CD8-positive, alpha-beta T cell (primary cell): ENCODE measurements at regions of chr6 and their contacts with region 1.

Region 1: GRCh38 chr6:89145787-89146646 is at the start of gene PM20D2:
- DNase-seq: peak; percentile 35 to 80 (median 64)
- ATAC-seq: peak; percentile 77
- H3K4me3 ChIP-seq: peak within 1 kb of the TSS; percentile 66 to 87
- H3K4me3 Mint-ChIP-seq: peak within 1 kb of the TSS; percentile 96
- H3K27ac ChIP-seq: peak within 1 kb of the TSS; percentile 73 to 85
- H3K27ac Mint-ChIP-seq: peak within 1 kb of the TSS; percentile 97
- H3K4me1 ChIP-seq: peaks cover 19% of the 10 kb centered on the region
- H3K4me1 Mint-ChIP-seq: peaks cover 34% of the 10 kb centered on the region
- H3K27me3 ChIP-seq: no peaks in the 10 kb centered on the region
- H3K27me3 Mint-ChIP-seq: no peaks in the 10 kb centered on the region
- CTCF ChIP-seq: no peak
- total RNA-seq, gene PM20D2: 5.5 to 6.2 TPM

Region 2: DNA sequence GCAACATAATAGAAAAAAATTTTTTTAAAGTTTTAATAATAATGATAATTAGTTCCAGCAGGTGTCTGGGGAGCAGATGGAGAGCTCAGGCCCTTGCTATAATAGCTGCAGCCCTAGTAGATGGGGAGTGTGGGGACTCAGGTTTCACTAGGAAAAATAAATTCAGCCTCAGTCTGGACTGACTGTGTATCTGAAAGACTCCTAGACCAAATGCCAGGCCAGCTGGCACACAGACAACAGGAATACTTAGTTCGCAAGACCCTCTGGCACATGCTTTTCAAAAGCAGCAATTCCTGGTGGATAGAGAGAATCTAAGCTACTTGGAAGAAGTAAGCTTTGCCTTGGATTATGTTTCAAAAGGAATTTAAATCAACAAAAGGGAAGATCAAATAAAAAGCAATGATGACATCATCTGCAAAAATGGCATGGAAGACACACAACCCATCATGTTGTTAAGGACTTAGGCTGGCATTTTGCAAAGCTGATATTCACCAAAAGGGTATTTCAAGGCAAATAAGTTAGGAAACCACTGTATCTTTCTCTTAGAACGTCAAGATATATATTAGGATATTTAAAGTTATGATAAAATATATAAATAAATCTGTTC is 290.4 kb before region 1 on chr6:
- CTCF ChIA-PET with region 1: no interaction called
- POLR2A ChIA-PET with region 1: no interaction called
- intact Hi-C with region 1: no loop called
- DNase-seq: no peak
- ATAC-seq: no peak
- H3K4me3 ChIP-seq: no peak overlapping the region
- H3K4me3 Mint-ChIP-seq: no peak overlapping the region
- H3K27ac ChIP-seq: no peak overlapping the region
- H3K27ac Mint-ChIP-seq: no peak overlapping the region
- H3K4me1 ChIP-seq: no peaks in the 10 kb centered on the region
- H3K4me1 Mint-ChIP-seq: no peaks in the 10 kb centered on the region
- H3K27me3 ChIP-seq: no peaks in the 10 kb centered on the region
- H3K27me3 Mint-ChIP-seq: no peaks in the 10 kb centered on the region
- CTCF ChIP-seq: no peak

Region 3: GRCh38 chr6:89117211-89118108 is 28.6 kb before region 1 on chr6 and contains the start of gene SRSF12:
- CTCF ChIA-PET with region 1: no interaction called
- POLR2A ChIA-PET with region 1: interaction called, 3 read pairs
- intact Hi-C with region 1: loop called in 1 of 2 experiments (anchors 2 kb)
- DNase-seq: peak in 8 of 9 experiments; percentile 14 to 64 (median 37)
- ATAC-seq: peak; percentile 84
- H3K4me3 ChIP-seq: peak within 1 kb of the TSS; percentile 38 to 44
- H3K4me3 Mint-ChIP-seq: peak within 1 kb of the TSS; percentile 85
- H3K27ac ChIP-seq: no peak within 1 kb of the TSS
- H3K27ac Mint-ChIP-seq: peak within 1 kb of the TSS; percentile 9
- H3K4me1 ChIP-seq: peaks cover 4% of the 10 kb centered on the region
- H3K4me1 Mint-ChIP-seq: peaks cover 9% of the 10 kb centered on the region
- H3K27me3 ChIP-seq: peaks cover 0 to 3% of the 10 kb centered on the region in 2 experiments
- H3K27me3 Mint-ChIP-seq: peaks cover 3% of the 10 kb centered on the region
- CTCF ChIP-seq: no peak
- total RNA-seq, gene SRSF12: not detected

Region 4: DNA sequence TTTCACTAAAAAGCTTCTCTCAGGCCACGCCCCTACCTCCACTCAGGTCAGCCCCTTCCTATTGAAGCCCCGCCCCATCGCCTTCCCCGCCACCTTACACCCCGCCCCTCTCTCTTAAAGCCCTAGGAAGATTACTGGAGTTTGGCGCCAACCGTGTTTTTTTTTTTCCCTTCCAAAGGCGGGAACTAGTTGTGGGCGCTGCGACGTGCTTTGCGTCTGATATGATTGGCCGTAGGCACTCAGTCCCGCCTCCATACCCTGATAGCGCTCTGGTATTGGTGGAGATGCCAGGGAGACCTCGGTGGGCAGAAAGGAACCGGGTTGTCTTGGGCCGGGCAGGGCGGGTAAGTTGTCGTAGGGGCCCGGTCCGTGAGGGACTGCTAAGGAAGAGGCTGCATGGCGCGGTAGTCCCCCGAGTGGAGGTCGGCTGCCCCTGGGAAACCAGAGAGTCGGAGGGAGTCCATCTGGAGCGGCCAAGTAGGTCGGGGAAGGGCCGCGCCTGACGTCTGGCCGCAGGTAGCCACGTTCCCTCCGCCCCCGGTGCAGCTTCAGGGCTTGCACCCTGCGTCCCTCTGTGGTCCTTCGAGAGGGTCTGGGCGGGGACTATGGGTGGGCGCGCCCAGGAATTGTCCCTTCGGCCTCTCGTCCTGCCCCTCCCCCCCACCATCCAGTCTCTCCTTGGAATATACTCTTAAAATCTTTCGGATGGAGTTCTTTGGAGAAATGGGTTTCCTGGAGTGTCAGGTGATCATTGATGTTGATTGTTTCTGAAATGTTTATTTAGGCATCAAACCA is 683.8 kb after region 1 on chr6 and contains the start of gene CASP8AP2:
- CTCF ChIA-PET with region 1: no interaction called
- POLR2A ChIA-PET with region 1: no interaction called
- intact Hi-C with region 1: loop called in 1 of 2 experiments (anchors 10 kb)
- DNase-seq: peak; percentile 88 to 99 (median 93)
- ATAC-seq: peak; percentile 94
- H3K4me3 ChIP-seq: peak within 1 kb of the TSS; percentile 82 to 95
- H3K4me3 Mint-ChIP-seq: peak within 1 kb of the TSS; percentile 99
- H3K27ac ChIP-seq: peak within 1 kb of the TSS; percentile 71 to 84
- H3K27ac Mint-ChIP-seq: peak within 1 kb of the TSS; percentile 97
- H3K4me1 ChIP-seq: peaks cover 14% of the 10 kb centered on the region
- H3K4me1 Mint-ChIP-seq: peaks cover 35% of the 10 kb centered on the region
- H3K27me3 ChIP-seq: no peaks in the 10 kb centered on the region
- H3K27me3 Mint-ChIP-seq: no peaks in the 10 kb centered on the region
- CTCF ChIP-seq: no peak
- total RNA-seq, gene CASP8AP2: 13.1 to 14.8 TPM